CD4-positive, alpha-beta memory T cell (primary cell): ENCODE measurements at regions of chr5 and their contacts with region 1.

Region 1: DNA sequence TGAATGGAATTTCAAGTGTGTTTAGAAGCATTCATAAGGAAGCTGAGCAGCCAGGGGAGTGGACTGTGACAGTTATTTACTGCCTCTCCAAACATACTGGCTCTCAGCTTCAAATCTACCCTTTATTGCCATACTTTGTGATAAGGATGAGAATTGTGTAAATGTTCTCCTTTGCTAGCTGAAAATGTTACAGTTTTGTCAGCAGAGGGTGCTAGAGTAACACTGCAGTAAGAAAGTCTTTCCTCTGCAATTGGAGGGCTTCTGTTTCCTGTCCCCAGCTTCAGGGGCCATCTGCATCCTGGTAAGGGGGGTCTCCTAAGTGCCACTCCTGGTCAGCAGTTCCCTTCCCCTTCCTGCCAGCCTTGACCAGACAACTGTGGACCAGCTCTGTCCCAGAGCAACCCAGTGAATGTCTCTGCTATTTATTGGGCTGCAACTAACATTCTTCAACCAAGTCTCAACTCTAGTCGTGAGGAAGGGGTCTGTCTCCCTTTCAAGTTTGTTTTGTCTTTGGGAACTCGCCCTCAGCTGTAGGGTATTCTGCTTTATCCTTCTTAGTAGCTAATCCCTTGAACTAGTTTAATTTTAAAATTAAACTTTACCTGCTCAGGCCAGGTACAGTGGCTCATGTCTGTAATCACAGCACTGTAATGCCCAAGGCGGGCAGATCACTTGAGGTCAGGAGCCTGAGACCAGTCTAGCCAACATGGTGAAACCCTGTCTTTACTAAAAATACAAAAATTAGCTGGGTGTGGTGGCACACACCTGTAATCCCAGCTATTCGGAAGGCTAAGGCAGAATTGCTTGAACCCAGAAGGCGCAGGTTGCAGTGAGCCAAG is 45.3 kb downstream of the RAPGEF6 start:
- DNase-seq: peak in 4 of 5 donors; percentile 56 to 60 (median 58)
- H3K4me3 ChIP-seq: no peak overlapping the region
- H3K4me3 Mint-ChIP-seq: no peak overlapping the region
- H3K27ac ChIP-seq: no peak overlapping the region
- H3K27ac Mint-ChIP-seq: peak overlapping the region in 4 of 7 donors; percentile 22 to 77 (median 52)
- H3K4me1 ChIP-seq: peaks cover 17% of the 10 kb centered on the region
- H3K4me1 Mint-ChIP-seq: peaks cover 21 to 58% (median 32%) of the 10 kb centered on the region in 4 donors
- H3K27me3 ChIP-seq: no peaks in the 10 kb centered on the region
- H3K27me3 Mint-ChIP-seq: no peaks in the 10 kb centered on the region

Region 2: GRCh38 chr5:131514316-131515283 is 75.1 kb before region 1 on chr5:
- CTCF ChIA-PET with region 1: interaction called, 22 read pairs
- POLR2A ChIA-PET with region 1: interaction called, 4 read pairs
- intact Hi-C with region 1: loop called (anchors 2 kb)
- DNase-seq: peak; percentile 67 to 79 (median 72)
- H3K4me3 ChIP-seq: peak overlapping the region; percentile 7 to 37
- H3K4me3 Mint-ChIP-seq: peak overlapping the region; percentile 79 to 92 (median 88)
- H3K27ac ChIP-seq: peak overlapping the region; percentile 61
- H3K27ac Mint-ChIP-seq: peak overlapping the region; percentile 81 to 98 (median 93)
- H3K4me1 ChIP-seq: peaks cover 60% of the 10 kb centered on the region
- H3K4me1 Mint-ChIP-seq: peaks cover 43 to 72% (median 53%) of the 10 kb centered on the region in 4 donors
- H3K27me3 ChIP-seq: no peaks in the 10 kb centered on the region
- H3K27me3 Mint-ChIP-seq: no peaks in the 10 kb centered on the region

Region 3: DNA sequence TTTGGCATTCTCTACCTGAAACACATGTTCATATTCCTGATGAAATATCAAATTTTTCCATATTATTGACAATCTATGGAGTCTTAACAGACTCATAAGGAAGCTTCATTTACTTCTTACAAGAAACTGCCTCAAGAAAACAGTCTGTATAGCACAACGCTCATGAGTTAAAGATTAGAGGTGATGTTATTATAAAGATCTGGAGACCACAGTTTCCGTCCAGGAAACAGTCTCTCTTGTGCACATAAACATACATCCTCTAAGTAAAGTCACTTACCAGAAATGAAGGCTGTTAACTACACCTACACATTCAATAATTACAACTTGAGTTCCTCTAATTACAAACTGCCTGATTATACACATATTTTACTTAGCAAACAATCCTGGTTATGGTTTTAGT is 41.6 kb before region 1 on chr5:
- CTCF ChIA-PET with region 1: interaction called, 8 read pairs
- POLR2A ChIA-PET with region 1: interaction called, 6 read pairs
- intact Hi-C with region 1: loop called (anchors 5 kb)
- DNase-seq: peak; percentile 54 to 71 (median 60)
- H3K4me3 ChIP-seq: peak overlapping the region; percentile 70 to 79
- H3K4me3 Mint-ChIP-seq: peak overlapping the region; percentile 84 to 99 (median 96)
- H3K27ac ChIP-seq: peak overlapping the region; percentile 61
- H3K27ac Mint-ChIP-seq: peak overlapping the region; percentile 89 to 97 (median 96)
- H3K4me1 ChIP-seq: peaks cover 64% of the 10 kb centered on the region
- H3K4me1 Mint-ChIP-seq: peaks cover 46 to 77% (median 57%) of the 10 kb centered on the region in 4 donors
- H3K27me3 ChIP-seq: no peaks in the 10 kb centered on the region
- H3K27me3 Mint-ChIP-seq: no peaks in the 10 kb centered on the region

Region 4: GRCh38 chr5:131628990-131629389 is 39.3 kb after region 1 on chr5:
- CTCF ChIA-PET with region 1: interaction called, 10 read pairs
- POLR2A ChIA-PET with region 1: interaction called, 4 read pairs
- intact Hi-C with region 1: loop called (anchors 2 kb)
- DNase-seq: no peak
- H3K4me3 ChIP-seq: no peak overlapping the region
- H3K4me3 Mint-ChIP-seq: peak overlapping the region in 7 of 8 donors; percentile 2 to 74 (median 55)
- H3K27ac ChIP-seq: no peak overlapping the region
- H3K27ac Mint-ChIP-seq: peak overlapping the region in 3 of 7 donors; percentile 14 to 82 (median 51)
- H3K4me1 ChIP-seq: peaks cover 81% of the 10 kb centered on the region
- H3K4me1 Mint-ChIP-seq: peaks cover 10 to 40% (median 28%) of the 10 kb centered on the region in 4 donors
- H3K27me3 ChIP-seq: no peaks in the 10 kb centered on the region
- H3K27me3 Mint-ChIP-seq: no peaks in the 10 kb centered on the region

Region 5: DNA sequence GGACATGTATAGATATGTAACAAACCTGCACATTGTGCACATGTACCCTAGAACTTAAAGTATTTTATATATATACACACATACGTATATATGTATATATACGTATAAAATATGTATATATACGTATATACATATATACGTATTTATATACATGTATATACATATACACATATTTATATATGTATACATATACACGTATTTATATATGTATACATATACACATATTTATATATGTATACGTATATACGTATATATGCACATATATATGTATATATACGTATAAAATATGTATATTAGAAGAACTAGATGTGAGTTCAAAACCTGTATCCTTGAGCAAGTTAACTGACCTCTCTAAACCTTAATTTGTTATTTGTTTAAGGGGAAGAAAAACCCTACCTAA is 145.7 kb after region 1 on chr5:
- CTCF ChIA-PET with region 1: no interaction called
- POLR2A ChIA-PET with region 1: no interaction called
- intact Hi-C with region 1: no loop called
- DNase-seq: no peak
- H3K4me3 ChIP-seq: no peak overlapping the region
- H3K4me3 Mint-ChIP-seq: no peak overlapping the region
- H3K27ac ChIP-seq: no peak overlapping the region
- H3K27ac Mint-ChIP-seq: no peak overlapping the region
- H3K4me1 ChIP-seq: no peaks in the 10 kb centered on the region
- H3K4me1 Mint-ChIP-seq: peaks cover 0 to 5% (median 2%) of the 10 kb centered on the region in 4 donors
- H3K27me3 ChIP-seq: no peaks in the 10 kb centered on the region
- H3K27me3 Mint-ChIP-seq: no peaks in the 10 kb centered on the region

Region 6: GRCh38 chr5:132001647-132002561 is 412.2 kb after region 1 on chr5:
- CTCF ChIA-PET with region 1: interaction called, 394 read pairs
- POLR2A ChIA-PET with region 1: interaction called, 31 read pairs
- intact Hi-C with region 1: no loop called
- DNase-seq: no peak
- H3K4me3 ChIP-seq: no peak overlapping the region
- H3K4me3 Mint-ChIP-seq: peak overlapping the region in 6 of 8 donors; percentile 26 to 83 (median 52)
- H3K27ac ChIP-seq: no peak overlapping the region
- H3K27ac Mint-ChIP-seq: peak overlapping the region in 6 of 7 donors; percentile 18 to 80 (median 62)
- H3K4me1 ChIP-seq: peaks cover 66% of the 10 kb centered on the region
- H3K4me1 Mint-ChIP-seq: peaks cover 44 to 68% (median 58%) of the 10 kb centered on the region in 4 donors
- H3K27me3 ChIP-seq: no peaks in the 10 kb centered on the region
- H3K27me3 Mint-ChIP-seq: no peaks in the 10 kb centered on the region